ENCODE measurements at regions of chr3 and their contacts with region 1.

Region 1: GRCh38 chr3:106176734-106177133 is 307.9 kb upstream of the CBLB start:
- DNase-seq: peak; percentile 68 to 82 (median 76)
- H3K4me3 ChIP-seq: peak overlapping the region in 1 of 2 donors; percentile 30
- H3K4me3 Mint-ChIP-seq: peak overlapping the region; percentile 67 to 86 (median 74)
- H3K27ac ChIP-seq: no peak overlapping the region
- H3K27ac Mint-ChIP-seq: peak overlapping the region; percentile 62 to 95 (median 76)
- H3K4me1 ChIP-seq: peaks cover 48% of the 10 kb centered on the region
- H3K4me1 Mint-ChIP-seq: peaks cover 39 to 63% (median 46%) of the 10 kb centered on the region in 4 donors
- H3K27me3 ChIP-seq: no peaks in the 10 kb centered on the region
- H3K27me3 Mint-ChIP-seq: no peaks in the 10 kb centered on the region

Region 2: GRCh38 chr3:105676621-105677300 is 500.0 kb before region 1 on chr3:
- CTCF ChIA-PET with region 1: no interaction called
- POLR2A ChIA-PET with region 1: no interaction called
- intact Hi-C with region 1: no loop called
- DNase-seq: no peak
- H3K4me3 ChIP-seq: no peak overlapping the region
- H3K4me3 Mint-ChIP-seq: no peak overlapping the region
- H3K27ac ChIP-seq: no peak overlapping the region
- H3K27ac Mint-ChIP-seq: peak overlapping the region in 4 of 7 donors; percentile 13 to 88 (median 46)
- H3K4me1 ChIP-seq: no peaks in the 10 kb centered on the region
- H3K4me1 Mint-ChIP-seq: peaks cover 0 to 23% (median 7%) of the 10 kb centered on the region in 4 donors
- H3K27me3 ChIP-seq: no peaks in the 10 kb centered on the region
- H3K27me3 Mint-ChIP-seq: no peaks in the 10 kb centered on the region

Region 3: GRCh38 chr3:106135451-106136160 is 41.1 kb before region 1 on chr3:
- CTCF ChIA-PET with region 1: no interaction called
- POLR2A ChIA-PET with region 1: no interaction called
- intact Hi-C with region 1: no loop called
- DNase-seq: no peak
- H3K4me3 ChIP-seq: no peak overlapping the region
- H3K4me3 Mint-ChIP-seq: peak overlapping the region in 1 of 8 donors; percentile 2
- H3K27ac ChIP-seq: no peak overlapping the region
- H3K27ac Mint-ChIP-seq: no peak overlapping the region
- H3K4me1 ChIP-seq: no peaks in the 10 kb centered on the region
- H3K4me1 Mint-ChIP-seq: peaks cover 0 to 5% (median 3%) of the 10 kb centered on the region in 4 donors
- H3K27me3 ChIP-seq: no peaks in the 10 kb centered on the region
- H3K27me3 Mint-ChIP-seq: no peaks in the 10 kb centered on the region

Region 4: GRCh38 chr3:106206146-106206545 is 29.4 kb after region 1 on chr3:
- CTCF ChIA-PET with region 1: no interaction called
- POLR2A ChIA-PET with region 1: interaction called, 3 read pairs
- intact Hi-C with region 1: loop called (anchors 5 kb)
- DNase-seq: peak; percentile 21 to 43 (median 30)
- H3K4me3 ChIP-seq: peak overlapping the region in 1 of 2 donors; percentile 2
- H3K4me3 Mint-ChIP-seq: peak overlapping the region; percentile 31 to 84 (median 77)
- H3K27ac ChIP-seq: no peak overlapping the region
- H3K27ac Mint-ChIP-seq: peak overlapping the region; percentile 59 to 88 (median 81)
- H3K4me1 ChIP-seq: peaks cover 28% of the 10 kb centered on the region
- H3K4me1 Mint-ChIP-seq: peaks cover 24 to 38% (median 27%) of the 10 kb centered on the region in 4 donors
- H3K27me3 ChIP-seq: no peaks in the 10 kb centered on the region
- H3K27me3 Mint-ChIP-seq: no peaks in the 10 kb centered on the region

Region 5: GRCh38 chr3:106333911-106334618 is 157.3 kb after region 1 on chr3:
- CTCF ChIA-PET with region 1: no interaction called
- POLR2A ChIA-PET with region 1: interaction called, 3 read pairs
- intact Hi-C with region 1: loop called (anchors 5 kb)
- DNase-seq: peak in 4 of 5 donors; percentile 17 to 66 (median 28)
- H3K4me3 ChIP-seq: peak overlapping the region in 1 of 2 donors; percentile 8
- H3K4me3 Mint-ChIP-seq: peak overlapping the region; percentile 14 to 71 (median 56)
- H3K27ac ChIP-seq: no peak overlapping the region
- H3K27ac Mint-ChIP-seq: peak overlapping the region; percentile 25 to 68 (median 43)
- H3K4me1 ChIP-seq: peaks cover 53% of the 10 kb centered on the region
- H3K4me1 Mint-ChIP-seq: peaks cover 37 to 70% (median 50%) of the 10 kb centered on the region in 4 donors
- H3K27me3 ChIP-seq: no peaks in the 10 kb centered on the region
- H3K27me3 Mint-ChIP-seq: no peaks in the 10 kb centered on the region

Region 6: DNA sequence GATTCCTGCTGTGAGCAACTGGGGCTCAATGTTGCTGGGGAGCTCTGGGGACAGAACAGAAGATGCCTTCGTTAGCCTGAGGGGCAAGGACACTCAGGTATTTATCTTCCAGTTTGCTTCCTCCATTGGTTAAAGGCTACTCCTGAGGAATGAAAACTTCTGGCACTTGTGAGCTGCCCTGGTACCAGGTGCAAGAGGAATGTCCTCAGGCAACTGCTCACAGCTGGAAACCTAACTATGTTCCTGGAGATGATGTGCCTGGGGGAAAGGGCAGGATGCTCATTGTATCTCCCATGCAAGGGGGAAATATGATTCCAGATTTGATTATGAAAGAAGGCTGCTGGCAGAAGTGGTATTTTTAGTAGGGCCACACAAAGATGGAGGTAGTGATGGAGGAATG is 1292.1 kb after region 1 on chr3:
- CTCF ChIA-PET with region 1: no interaction called
- POLR2A ChIA-PET with region 1: no interaction called
- intact Hi-C with region 1: no loop called
- DNase-seq: no peak
- H3K4me3 ChIP-seq: no peak overlapping the region
- H3K4me3 Mint-ChIP-seq: no peak overlapping the region
- H3K27ac ChIP-seq: no peak overlapping the region
- H3K27ac Mint-ChIP-seq: no peak overlapping the region
- H3K4me1 ChIP-seq: no peaks in the 10 kb centered on the region
- H3K4me1 Mint-ChIP-seq: no peaks in the 10 kb centered on the region
- H3K27me3 ChIP-seq: no peaks in the 10 kb centered on the region
- H3K27me3 Mint-ChIP-seq: peaks cover 10 to 19% of the 10 kb centered on the region in 2 donors